Mammary epithelial cell (primary cell): ENCODE measurements at regions of chr13 and their contacts with region 1.

Region 1: DNA sequence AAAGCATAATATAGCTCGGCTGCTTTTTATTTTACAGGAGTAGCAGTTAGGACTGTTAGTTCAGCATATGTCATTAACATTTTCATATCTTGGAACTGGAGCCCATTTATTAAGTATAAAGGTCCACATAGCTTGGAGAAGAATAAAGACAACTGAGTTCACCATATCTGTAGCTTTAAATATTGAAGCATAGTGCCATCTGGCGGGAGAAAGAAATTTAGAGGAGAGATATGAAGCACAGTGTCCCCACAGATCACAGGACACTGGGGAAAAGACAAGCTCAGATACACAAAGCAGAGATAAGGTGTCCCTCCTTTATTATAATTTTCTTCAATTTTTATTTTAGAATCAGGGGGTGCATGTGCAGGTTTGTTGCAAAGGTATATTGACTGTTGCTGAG is 104.7 kb upstream of the FREM2 start:
- DNase-seq: peak; percentile 44
- H3K4me3 ChIP-seq: no peak overlapping the region
- H3K27ac ChIP-seq: no peak overlapping the region
- H3K4me1 ChIP-seq: no peaks in the 10 kb centered on the region
- H3K27me3 ChIP-seq: no peaks in the 10 kb centered on the region
- CTCF ChIP-seq: peak; percentile 38 to 56

Region 2: DNA sequence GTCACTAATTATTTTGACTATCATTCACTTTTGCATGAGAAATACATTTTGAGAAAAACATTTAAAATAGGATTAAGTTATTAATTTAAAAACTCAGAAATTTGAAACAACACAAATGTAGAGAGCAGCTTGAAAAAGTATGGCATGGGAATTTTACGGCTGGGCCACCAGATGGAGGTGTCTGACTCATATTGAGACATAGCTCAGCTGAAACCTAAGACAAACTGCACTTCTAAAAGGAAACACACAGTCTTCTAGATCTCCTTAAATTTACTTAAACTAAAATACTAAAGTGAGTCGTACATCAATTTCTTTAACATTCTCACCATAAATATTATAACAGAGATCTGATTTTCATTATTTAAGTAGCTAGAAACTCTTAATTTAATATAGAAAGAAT is 941.6 kb before region 1 on chr13:
- CTCF ChIA-PET with region 1: interaction called, 4 read pairs
- dilution Hi-C with region 1: no loop called
- in situ Hi-C with region 1: no loop called
- intact Hi-C with region 1: loop called (anchors 2 kb)
- DNase-seq: peak; percentile 21
- H3K4me3 ChIP-seq: no peak overlapping the region
- H3K27ac ChIP-seq: no peak overlapping the region
- H3K4me1 ChIP-seq: no peaks in the 10 kb centered on the region
- H3K27me3 ChIP-seq: no peaks in the 10 kb centered on the region
- CTCF ChIP-seq: peak; percentile 53 to 74

Region 3: GRCh38 chr13:37769078-37769477 is 813.1 kb before region 1 on chr13:
- CTCF ChIA-PET with region 1: interaction called, 4 read pairs
- dilution Hi-C with region 1: no loop called
- in situ Hi-C with region 1: no loop called
- intact Hi-C with region 1: loop called (anchors 5 kb)
- DNase-seq: no peak
- H3K4me3 ChIP-seq: no peak overlapping the region
- H3K27ac ChIP-seq: no peak overlapping the region
- H3K4me1 ChIP-seq: no peaks in the 10 kb centered on the region
- H3K27me3 ChIP-seq: peaks cover 2% of the 10 kb centered on the region
- CTCF ChIP-seq: peak in 1 of 2 donors; percentile 39

Region 4: DNA sequence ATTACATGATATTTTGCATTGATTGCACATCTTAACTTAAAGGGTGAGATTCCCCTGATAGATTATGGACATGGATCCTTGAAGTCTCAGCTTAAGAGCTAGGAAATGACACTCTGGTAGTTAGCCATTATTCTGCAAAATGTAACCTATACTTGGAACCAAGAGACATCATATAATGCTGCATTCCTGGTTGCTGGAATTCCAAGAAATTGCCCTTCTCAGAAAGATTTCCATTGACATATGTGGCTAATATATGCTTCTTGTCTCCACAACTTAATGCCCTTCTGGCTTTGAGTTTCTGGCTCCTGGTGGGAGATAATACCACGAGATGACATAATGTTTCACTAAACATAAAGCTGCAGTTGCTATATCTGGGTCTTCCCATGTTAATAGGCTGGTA is 508.2 kb before region 1 on chr13:
- CTCF ChIA-PET with region 1: no interaction called
- dilution Hi-C with region 1: no loop called
- in situ Hi-C with region 1: no loop called
- intact Hi-C with region 1: loop called (anchors 5 kb)
- DNase-seq: no peak
- H3K4me3 ChIP-seq: no peak overlapping the region
- H3K27ac ChIP-seq: no peak overlapping the region
- H3K4me1 ChIP-seq: no peaks in the 10 kb centered on the region
- H3K27me3 ChIP-seq: no peaks in the 10 kb centered on the region
- CTCF ChIP-seq: no peak

Region 5: DNA sequence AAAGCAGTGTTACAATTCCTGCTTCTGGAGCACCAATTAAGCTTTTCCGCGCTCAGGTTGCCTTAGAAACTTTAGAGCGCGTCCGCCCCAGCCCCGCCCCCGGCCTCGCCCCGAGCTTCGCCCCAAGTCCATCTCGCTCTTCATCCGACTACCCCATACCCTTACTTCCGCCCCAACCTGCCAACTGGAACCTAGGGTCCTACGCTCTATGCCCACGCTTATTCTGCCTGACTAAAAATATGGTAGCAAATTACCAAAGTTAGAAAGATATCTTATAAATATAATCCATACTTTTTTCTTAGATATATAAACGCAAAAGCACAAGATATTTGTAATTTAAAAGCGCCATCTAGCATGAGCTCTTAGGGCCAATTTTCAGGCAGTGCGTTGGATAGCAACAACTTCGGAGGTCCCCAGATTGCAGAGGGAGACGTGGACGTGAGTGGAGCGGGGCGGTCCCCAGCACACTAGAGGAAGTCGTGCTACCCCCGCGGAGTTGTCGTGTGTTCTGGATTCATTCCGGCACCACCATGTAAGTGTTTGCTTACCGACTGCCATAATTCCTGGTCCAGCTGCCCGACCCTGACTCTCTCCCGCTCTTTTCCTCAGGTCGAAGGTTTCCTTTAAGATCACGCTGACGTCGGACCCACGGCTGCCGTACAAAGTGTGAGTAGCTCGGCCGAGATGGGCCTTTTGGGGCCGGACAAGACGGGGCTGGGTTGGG is 232.6 kb before region 1 on chr13 and contains the start of gene UFM1:
- CTCF ChIA-PET with region 1: no interaction called
- dilution Hi-C with region 1: no loop called
- in situ Hi-C with region 1: no loop called
- intact Hi-C with region 1: loop called (anchors 5 kb)
- DNase-seq: peak; percentile 90
- H3K4me3 ChIP-seq: peak within 1 kb of the TSS; percentile 68 to 90 (median 74)
- H3K27ac ChIP-seq: peak within 1 kb of the TSS; percentile 98
- H3K4me1 ChIP-seq: peaks cover 21% of the 10 kb centered on the region
- H3K27me3 ChIP-seq: no peaks in the 10 kb centered on the region
- CTCF ChIP-seq: no peak
- total RNA-seq, gene UFM1: 67.4 to 97.5 TPM